Endothelial cell of umbilical vein (primary cell): ENCODE measurements at regions of chr2 and their contacts with region 1.

Region 1: DNA sequence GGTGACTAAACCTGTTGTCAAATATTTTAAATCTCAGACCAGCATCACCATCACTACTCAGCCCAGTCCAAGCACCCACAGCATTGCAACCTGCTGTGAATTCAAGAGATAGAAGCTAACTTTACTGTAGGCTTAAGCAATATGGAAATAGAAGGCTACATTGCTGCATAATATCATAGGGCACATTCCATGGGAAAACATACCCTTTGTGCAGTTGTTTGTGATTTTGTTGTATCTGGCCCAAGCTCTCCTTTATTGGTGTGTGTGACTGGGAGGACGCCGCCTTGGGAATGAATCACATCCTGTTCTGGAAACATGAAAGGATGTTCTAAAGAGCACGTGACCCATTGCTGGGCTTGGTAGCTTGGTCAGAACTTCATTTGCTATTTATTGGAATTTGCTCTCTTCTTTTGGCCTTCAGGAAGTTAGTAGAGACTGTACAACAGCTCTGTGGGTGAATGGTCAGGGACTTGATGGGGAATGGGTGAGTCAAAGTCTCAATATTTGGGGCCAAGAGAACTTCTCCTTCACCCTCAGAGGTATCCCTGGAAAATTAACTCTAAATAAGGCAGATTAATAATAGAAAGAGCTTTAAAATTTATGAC is 106.8 kb upstream of the SERPINE2 start:
- DNase-seq: peak; percentile 94
- H3K4me3 ChIP-seq: no peak overlapping the region
- H3K27ac ChIP-seq: peak overlapping the region; percentile 70
- H3K4me1 ChIP-seq: peaks cover 39% of the 10 kb centered on the region
- H3K27me3 ChIP-seq: peaks cover 2 to 3% of the 10 kb centered on the region in 2 experiments
- CTCF ChIP-seq: no peak
- POLR2A ChIP-seq: no peak

Region 2: GRCh38 chr2:223692191-223692947 is 453.5 kb before region 1 on chr2:
- CTCF ChIA-PET with region 1: no interaction called
- POLR2A ChIA-PET with region 1: no interaction called
- dilution Hi-C with region 1: no loop called
- intact Hi-C with region 1: loop called (anchors 10 kb)
- DNase-seq: peak; percentile 69
- H3K4me3 ChIP-seq: no peak overlapping the region
- H3K27ac ChIP-seq: no peak overlapping the region
- H3K4me1 ChIP-seq: peaks cover 13% of the 10 kb centered on the region
- H3K27me3 ChIP-seq: no peaks in the 10 kb centered on the region
- CTCF ChIP-seq: peak; percentile 64 to 82
- POLR2A ChIP-seq: no peak

Region 3: GRCh38 chr2:223815186-223815883 is 330.5 kb before region 1 on chr2:
- CTCF ChIA-PET with region 1: no interaction called
- POLR2A ChIA-PET with region 1: no interaction called
- dilution Hi-C with region 1: no loop called
- intact Hi-C with region 1: loop called (anchors 5 kb)
- DNase-seq: peak; percentile 97
- H3K4me3 ChIP-seq: no peak overlapping the region
- H3K27ac ChIP-seq: peak overlapping the region; percentile 49
- H3K4me1 ChIP-seq: peaks cover 25% of the 10 kb centered on the region
- H3K27me3 ChIP-seq: no peaks in the 10 kb centered on the region
- CTCF ChIP-seq: no peak
- POLR2A ChIP-seq: no peak

Region 4: GRCh38 chr2:223993621-223994232 is 152.1 kb before region 1 on chr2:
- CTCF ChIA-PET with region 1: interaction called, 12 read pairs
- POLR2A ChIA-PET with region 1: no interaction called
- dilution Hi-C with region 1: no loop called
- intact Hi-C with region 1: loop called (anchors 5 kb)
- DNase-seq: peak; percentile 74
- H3K4me3 ChIP-seq: no peak overlapping the region
- H3K27ac ChIP-seq: no peak overlapping the region
- H3K4me1 ChIP-seq: no peaks in the 10 kb centered on the region
- H3K27me3 ChIP-seq: no peaks in the 10 kb centered on the region
- CTCF ChIP-seq: peak; percentile 69 to 75
- POLR2A ChIP-seq: no peak

Region 5: GRCh38 chr2:224122542-224122941 is 23.3 kb before region 1 on chr2:
- CTCF ChIA-PET with region 1: interaction called, 7 read pairs
- POLR2A ChIA-PET with region 1: no interaction called
- dilution Hi-C with region 1: no loop called
- intact Hi-C with region 1: loop called (anchors 1 kb)
- DNase-seq: peak; percentile 79
- H3K4me3 ChIP-seq: no peak overlapping the region
- H3K27ac ChIP-seq: no peak overlapping the region
- H3K4me1 ChIP-seq: peaks cover 18% of the 10 kb centered on the region
- H3K27me3 ChIP-seq: peaks cover 0 to 6% of the 10 kb centered on the region in 2 experiments
- CTCF ChIP-seq: no peak
- POLR2A ChIP-seq: no peak

Region 6: DNA sequence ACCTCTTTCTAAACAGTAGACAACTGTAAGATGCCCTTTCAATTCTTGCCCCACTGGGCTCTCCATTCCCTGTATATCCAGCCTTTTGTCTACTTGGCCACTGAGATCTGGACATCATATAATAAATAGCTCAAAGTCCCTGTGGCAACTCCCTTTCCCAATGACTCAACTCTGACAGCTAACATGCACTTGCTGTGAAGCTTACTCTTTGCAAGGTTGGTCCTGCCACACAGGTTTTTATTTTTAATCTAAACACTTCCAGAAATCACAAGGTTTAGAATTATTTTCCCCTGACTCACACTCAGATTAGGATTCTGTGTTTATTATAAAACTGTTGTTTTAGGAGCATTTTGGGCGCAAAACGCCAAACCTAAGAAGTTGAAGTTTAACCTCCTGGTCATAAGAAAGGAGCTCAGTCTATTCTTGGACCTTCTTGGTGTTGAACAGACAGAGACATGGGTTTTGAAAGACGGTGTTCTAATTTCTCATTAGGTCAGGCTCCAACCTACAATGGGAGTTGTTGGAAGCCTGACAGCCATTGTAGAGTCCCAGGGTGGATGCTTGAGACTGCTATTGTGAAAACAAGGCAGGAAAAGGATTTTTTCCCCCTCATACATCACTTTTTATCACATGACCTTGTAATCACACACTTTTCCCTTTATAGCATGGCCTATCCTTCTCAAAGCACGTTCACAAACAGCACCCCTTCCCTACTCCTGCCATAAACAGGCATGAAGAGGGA is 17.9 kb after region 1 on chr2:
- CTCF ChIA-PET with region 1: no interaction called
- POLR2A ChIA-PET with region 1: no interaction called
- dilution Hi-C with region 1: no loop called
- intact Hi-C with region 1: no loop called
- DNase-seq: peak; percentile 39
- H3K4me3 ChIP-seq: no peak overlapping the region
- H3K27ac ChIP-seq: no peak overlapping the region
- H3K4me1 ChIP-seq: no peaks in the 10 kb centered on the region
- H3K27me3 ChIP-seq: no peaks in the 10 kb centered on the region
- CTCF ChIP-seq: no peak
- POLR2A ChIP-seq: no peak

Region 7: DNA sequence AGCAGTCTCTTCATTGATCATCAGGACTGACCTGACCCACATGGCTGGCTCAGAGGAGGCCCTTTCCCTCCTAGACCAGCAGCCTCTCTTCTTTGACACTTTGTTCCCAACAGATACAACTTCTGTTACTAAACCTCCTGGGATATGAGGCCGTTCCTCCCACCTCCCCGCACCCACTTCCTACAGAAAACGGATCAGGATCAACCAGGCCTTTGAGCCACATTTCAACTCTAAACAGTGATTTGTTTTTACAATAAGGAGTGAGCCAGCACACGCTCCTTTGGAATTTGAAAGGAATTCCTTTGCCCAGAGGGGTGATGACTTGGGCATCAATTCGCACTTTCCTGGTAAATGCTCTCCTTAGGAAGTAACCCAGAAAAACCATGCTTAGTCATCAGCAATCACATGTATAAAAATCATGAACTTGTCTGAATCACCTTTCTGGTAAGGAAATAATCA is 75.6 kb after region 1 on chr2:
- CTCF ChIA-PET with region 1: no interaction called
- POLR2A ChIA-PET with region 1: no interaction called
- dilution Hi-C with region 1: no loop called
- intact Hi-C with region 1: loop called (anchors 1 kb)
- DNase-seq: peak; percentile 88
- H3K4me3 ChIP-seq: no peak overlapping the region
- H3K27ac ChIP-seq: peak overlapping the region; percentile 99
- H3K4me1 ChIP-seq: peaks cover 26% of the 10 kb centered on the region
- H3K27me3 ChIP-seq: no peaks in the 10 kb centered on the region
- CTCF ChIP-seq: no peak
- POLR2A ChIP-seq: no peak

Region 8: DNA sequence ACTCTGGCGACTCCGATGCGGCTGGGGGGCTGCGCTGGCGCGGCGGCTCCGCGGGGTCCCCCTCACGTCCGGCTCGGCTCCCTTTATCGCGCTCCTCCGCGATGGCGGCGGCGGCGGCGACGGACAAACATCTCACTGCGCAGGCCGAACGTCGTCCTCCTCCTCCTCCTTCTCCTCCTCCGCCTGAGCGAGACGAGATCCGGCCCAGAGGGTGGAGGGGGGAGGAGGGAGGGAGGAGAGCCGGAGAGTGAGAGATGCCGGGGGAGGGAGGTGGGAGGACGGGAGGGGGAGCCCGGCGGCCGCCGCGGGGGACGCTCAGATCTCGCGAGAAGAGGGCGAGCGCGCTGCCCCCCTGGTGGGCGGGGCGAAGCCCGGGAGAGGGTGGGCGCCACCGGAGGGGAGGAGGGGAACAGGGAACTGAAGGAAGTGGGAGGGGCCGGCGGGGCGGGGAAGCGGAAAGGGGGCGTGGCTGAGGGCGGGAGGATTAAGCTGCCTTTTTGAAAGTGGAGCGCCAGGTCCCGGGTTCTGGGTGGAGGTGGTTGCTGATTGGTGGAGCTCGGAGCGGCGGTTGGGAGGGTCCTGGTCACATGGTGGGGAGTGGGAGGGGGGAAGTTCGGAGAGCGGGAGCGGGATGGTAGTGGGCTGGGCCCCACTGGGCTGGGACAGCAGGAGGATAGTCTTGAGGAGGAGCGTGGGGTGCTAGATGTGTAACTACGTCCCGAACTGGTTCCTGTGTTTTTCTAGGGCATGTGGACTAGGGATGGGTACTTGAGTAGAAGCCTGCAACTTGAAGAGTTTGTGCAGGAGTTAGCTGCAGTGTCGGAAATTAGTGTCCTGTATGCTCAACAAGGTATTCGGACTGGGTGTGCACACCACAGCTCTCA is 439.6 kb after region 1 on chr2 and contains the start of gene CUL3:
- CTCF ChIA-PET with region 1: no interaction called
- POLR2A ChIA-PET with region 1: no interaction called
- dilution Hi-C with region 1: no loop called
- intact Hi-C with region 1: loop called (anchors 10 kb)
- DNase-seq: peak; percentile 98
- H3K4me3 ChIP-seq: peak within 1 kb of the TSS; percentile 69 to 96 (median 85)
- H3K27ac ChIP-seq: peak within 1 kb of the TSS; percentile 74
- H3K4me1 ChIP-seq: peaks cover 18% of the 10 kb centered on the region
- H3K27me3 ChIP-seq: no peaks in the 10 kb centered on the region
- CTCF ChIP-seq: no peak
- POLR2A ChIP-seq: peak; percentile 62
- total RNA-seq, gene CUL3: 82.3 and 87.1 TPM in 2 replicates